OCI-LY7 (cell line): ENCODE measurements at regions of chr1 and their contacts with region 1.

Region 1: DNA sequence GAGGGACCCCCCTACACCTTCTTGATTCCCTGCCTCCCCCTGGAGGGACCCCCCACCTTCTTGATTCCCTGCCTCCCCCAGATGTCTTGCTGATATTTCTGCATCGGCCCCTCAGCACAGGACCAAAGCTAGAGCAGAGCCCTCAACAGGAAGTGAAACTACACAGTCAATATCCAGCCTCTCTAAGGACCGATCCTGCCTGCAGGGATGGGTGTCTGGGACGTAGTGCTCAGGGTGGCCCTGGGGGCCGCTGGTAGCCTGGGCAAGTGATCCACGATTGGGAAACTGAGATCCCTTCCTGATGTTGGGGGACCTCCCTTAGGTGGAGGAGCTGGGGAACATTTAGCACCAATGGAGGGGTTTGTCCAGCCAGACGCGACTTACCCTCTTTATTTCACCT is 3.9 kb upstream of the LEFTY2 start:
- DNase-seq: peak; percentile 85
- H3K4me3 ChIP-seq: peak overlapping the region; percentile 34
- H3K27ac ChIP-seq: peak overlapping the region; percentile 95
- H3K4me1 ChIP-seq: peaks cover 85% of the 10 kb centered on the region
- CTCF ChIP-seq: no peak

Region 2: DNA sequence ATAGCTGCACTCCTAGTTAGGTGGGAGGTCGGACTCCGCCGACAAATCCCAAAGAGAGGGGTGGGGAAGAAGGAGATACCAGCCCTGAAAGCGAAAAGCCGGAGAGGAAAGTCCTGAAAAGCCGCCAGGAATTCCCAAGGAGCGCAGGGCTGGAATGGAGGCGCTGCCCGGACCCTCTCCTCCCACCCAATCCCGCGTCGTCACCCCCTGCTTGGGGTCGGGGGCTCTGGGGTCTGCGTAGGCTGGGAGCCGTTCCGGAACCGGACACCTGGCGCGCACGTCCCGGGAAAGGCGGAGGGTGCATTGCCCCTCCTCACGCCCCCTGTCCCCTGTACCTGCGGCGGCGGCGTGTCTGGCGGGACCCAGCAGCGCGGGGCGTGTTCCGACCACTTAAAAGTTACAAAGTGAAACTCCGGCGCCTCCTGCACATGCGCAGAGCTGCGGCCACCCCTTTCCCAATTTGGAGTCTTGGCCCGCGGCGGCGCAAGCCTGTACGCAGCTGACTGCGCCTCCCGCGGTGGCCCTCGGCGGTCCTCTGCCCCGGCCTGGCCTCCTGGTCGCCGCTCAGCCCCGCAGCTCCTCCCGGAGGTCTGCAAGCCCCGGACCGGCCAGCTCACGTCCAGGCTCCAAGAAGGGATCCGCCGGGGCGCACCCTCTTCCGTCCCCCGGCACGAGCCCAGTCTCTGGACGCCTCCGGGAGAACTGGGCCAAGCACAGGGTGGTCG is 62.8 kb before region 1 on chr1 and contains the start of gene TMEM63A:
- CTCF ChIA-PET with region 1: interaction called, 4 read pairs
- POLR2A ChIA-PET with region 1: interaction called, 7 read pairs
- intact Hi-C with region 1: loop called (anchors 2 kb)
- DNase-seq: peak; percentile 86
- H3K4me3 ChIP-seq: peak within 1 kb of the TSS; percentile 83
- H3K27ac ChIP-seq: peak within 1 kb of the TSS; percentile 32
- H3K4me1 ChIP-seq: peaks cover 47% of the 10 kb centered on the region
- CTCF ChIP-seq: peak; percentile 47; the same call in 1 of the 2 replicates
- total RNA-seq, gene TMEM63A: 20.9 and 21.0 TPM in 2 replicates

Region 3: GRCh38 chr1:225933072-225933471 is 11.9 kb before region 1 on chr1:
- CTCF ChIA-PET with region 1: interaction called, 5 read pairs
- POLR2A ChIA-PET with region 1: interaction called, 10 read pairs
- intact Hi-C with region 1: no loop called
- DNase-seq: no peak
- H3K4me3 ChIP-seq: no peak overlapping the region
- H3K27ac ChIP-seq: no peak overlapping the region
- H3K4me1 ChIP-seq: peaks cover 37% of the 10 kb centered on the region
- CTCF ChIP-seq: no peak

Region 4: GRCh38 chr1:225962440-225962975 is 17.6 kb after region 1 on chr1:
- CTCF ChIA-PET with region 1: no interaction called
- POLR2A ChIA-PET with region 1: interaction called, 12 read pairs
- intact Hi-C with region 1: no loop called
- DNase-seq: peak; percentile 78
- H3K4me3 ChIP-seq: no peak overlapping the region
- H3K27ac ChIP-seq: no peak overlapping the region
- H3K4me1 ChIP-seq: peaks cover 8% of the 10 kb centered on the region
- CTCF ChIP-seq: peak; percentile 99